ENCODE measurements at regions of chr1 and their contacts with region 1.

Region 1: GRCh38 chr1:30856260-30856790 is 52.2 kb downstream of the SDC3 start:
- DNase-seq: no peak
- ATAC-seq: peak; percentile 34
- H3K4me3 Mint-ChIP-seq: no peak overlapping the region
- H3K27ac Mint-ChIP-seq: no peak overlapping the region
- H3K4me1 Mint-ChIP-seq: peaks cover 2% of the 10 kb centered on the region
- H3K27me3 Mint-ChIP-seq: peaks cover 39% of the 10 kb centered on the region
- CTCF ChIP-seq: no peak

Region 2: DNA sequence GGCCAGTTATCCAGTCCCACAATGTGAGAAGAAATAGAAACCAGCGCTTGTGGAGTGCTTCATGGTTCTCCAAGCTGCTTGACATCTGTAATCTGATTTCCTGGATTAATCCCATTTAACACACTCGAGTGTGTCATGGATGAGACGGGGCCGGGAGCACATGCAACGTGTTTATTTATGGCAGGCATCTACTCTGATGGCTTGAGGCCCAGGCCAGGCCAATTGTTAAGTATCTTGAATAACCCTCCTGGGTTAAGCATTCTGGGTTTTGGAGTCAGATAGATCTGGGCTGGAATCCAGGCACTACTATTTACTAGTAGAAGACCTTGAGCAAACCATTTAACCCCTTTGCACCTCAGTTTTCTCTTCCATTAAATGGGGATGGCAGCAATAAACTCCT is 61.3 kb before region 1 on chr1:
- CTCF ChIA-PET with region 1: no interaction called
- POLR2A ChIA-PET with region 1: no interaction called
- intact Hi-C with region 1: no loop called
- DNase-seq: no peak
- ATAC-seq: no peak
- H3K4me3 Mint-ChIP-seq: no peak overlapping the region
- H3K27ac Mint-ChIP-seq: no peak overlapping the region
- H3K4me1 Mint-ChIP-seq: peaks cover 24% of the 10 kb centered on the region
- H3K27me3 Mint-ChIP-seq: peaks cover under 1% of the 10 kb centered on the region
- CTCF ChIP-seq: no peak

Region 3: DNA sequence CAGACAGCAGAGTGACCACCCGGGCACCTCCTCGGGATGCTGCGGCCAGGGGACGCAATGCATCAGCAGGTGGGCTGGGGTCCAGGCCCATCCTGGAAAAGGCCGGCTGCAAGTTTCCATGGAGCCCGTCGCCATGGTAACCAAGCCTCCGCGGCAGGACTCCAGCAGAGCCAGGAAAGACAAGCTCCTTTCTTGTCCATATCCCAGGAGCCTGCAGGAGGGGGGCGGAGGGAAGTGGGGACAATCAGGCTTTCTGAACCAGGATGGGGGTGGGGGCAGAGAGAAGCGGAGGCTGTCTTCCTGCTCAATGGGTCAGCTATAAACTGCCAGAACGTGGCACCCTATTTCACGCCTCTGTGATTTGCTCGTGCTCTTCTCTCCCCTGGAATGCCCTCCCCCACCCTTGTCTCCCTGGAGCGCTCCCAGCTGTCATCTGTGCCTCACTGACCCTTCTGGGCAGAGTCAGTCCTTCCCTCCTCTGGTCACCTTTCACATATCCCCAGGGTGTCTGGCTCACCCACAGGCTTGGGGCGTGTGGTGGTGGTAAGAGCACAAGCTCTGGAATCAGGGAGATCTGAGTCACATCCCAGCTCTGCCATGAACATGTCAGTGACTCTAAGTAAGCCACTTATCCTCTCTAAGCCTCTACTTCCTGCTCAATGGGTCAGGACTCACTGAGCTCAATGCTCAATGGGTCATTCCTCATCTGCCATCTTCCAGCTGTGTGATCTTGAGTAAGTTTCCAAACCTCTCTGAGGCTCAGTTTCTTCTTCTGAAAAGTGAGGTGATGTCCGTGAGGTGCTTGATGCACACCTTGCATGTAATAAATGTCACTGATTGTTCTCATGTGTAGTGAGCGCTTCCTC is 39.9 kb before region 1 on chr1:
- CTCF ChIA-PET with region 1: no interaction called
- POLR2A ChIA-PET with region 1: no interaction called
- intact Hi-C with region 1: loop called (anchors 5 kb)
- DNase-seq: no peak
- ATAC-seq: no peak
- H3K4me3 Mint-ChIP-seq: no peak overlapping the region
- H3K27ac Mint-ChIP-seq: no peak overlapping the region
- H3K4me1 Mint-ChIP-seq: peaks cover 4% of the 10 kb centered on the region
- H3K27me3 Mint-ChIP-seq: peaks cover 42% of the 10 kb centered on the region
- CTCF ChIP-seq: no peak

Region 4: GRCh38 chr1:30895944-30896660 is 39.8 kb after region 1 on chr1:
- CTCF ChIA-PET with region 1: no interaction called
- POLR2A ChIA-PET with region 1: no interaction called
- intact Hi-C with region 1: no loop called
- DNase-seq: no peak
- ATAC-seq: no peak
- H3K4me3 Mint-ChIP-seq: no peak overlapping the region
- H3K27ac Mint-ChIP-seq: no peak overlapping the region
- H3K4me1 Mint-ChIP-seq: peaks cover 25% of the 10 kb centered on the region
- H3K27me3 Mint-ChIP-seq: peaks cover 29% of the 10 kb centered on the region
- CTCF ChIP-seq: no peak